ENCODE measurements at regions of chr3 and their contacts with region 1.

Region 1: DNA sequence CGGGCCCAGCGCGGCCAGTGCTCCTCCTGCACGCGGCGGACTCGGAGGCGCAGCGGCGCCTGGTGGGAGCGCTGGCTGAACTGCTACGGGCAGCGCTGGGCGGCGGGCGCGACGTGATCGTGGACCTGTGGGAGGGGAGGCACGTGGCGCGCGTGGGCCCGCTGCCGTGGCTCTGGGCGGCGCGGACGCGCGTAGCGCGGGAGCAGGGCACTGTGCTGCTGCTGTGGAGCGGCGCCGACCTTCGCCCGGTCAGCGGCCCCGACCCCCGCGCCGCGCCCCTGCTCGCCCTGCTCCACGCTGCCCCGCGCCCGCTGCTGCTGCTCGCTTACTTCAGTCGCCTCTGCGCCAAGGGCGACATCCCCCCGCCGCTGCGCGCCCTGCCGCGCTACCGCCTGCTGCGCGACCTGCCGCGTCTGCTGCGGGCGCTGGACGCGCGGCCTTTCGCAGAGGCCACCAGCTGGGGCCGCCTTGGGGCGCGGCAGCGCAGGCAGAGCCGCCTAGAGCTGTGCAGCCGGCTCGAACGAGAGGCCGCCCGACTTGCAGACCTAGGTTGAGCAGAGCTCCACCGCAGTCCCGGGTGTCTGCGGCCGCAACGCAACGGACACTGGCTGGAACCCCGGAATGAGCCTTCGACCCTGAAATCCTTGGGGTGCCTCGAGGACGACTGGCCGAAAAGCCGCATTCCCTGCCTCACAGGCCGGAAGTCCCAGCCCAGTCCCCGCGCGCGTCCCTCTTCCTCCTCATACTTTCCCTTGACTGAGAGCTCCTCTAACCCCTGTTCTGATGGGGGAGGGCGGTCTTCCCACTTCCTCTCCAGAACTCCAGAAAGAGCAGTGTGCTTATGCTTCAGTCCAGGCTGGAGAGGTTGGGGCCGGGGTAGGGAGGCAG is 1.4 kb upstream of the IL17RC start:
- DNase-seq: no peak
- H3K4me3 Mint-ChIP-seq: peak overlapping the region; percentile 68
- H3K27ac Mint-ChIP-seq: no peak overlapping the region
- H3K4me1 Mint-ChIP-seq: peaks cover 16% of the 10 kb centered on the region
- H3K27me3 Mint-ChIP-seq: peaks cover 7% of the 10 kb centered on the region

Region 2: DNA sequence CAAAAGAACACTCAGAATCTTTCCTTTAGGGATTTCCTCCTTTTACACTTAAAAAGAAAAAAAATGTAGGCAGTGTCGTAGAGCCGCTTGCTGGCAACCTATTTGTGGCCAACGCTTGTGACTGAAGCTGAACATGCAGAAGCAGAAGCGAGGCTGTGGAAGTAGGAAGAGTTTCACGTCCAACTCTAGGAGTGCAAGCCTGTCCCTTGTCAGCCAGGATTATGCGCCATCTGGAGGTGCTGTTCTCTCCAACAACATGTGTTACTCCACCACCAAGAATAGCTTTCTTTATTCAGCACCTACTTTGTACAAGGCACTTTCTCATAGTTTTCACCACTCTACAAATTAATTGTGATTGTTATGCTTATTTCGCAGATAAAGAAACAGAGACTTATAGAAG is 1637.0 kb before region 1 on chr3:
- intact Hi-C with region 1: no loop called
- DNase-seq: no peak
- H3K4me3 Mint-ChIP-seq: no peak overlapping the region
- H3K27ac Mint-ChIP-seq: no peak overlapping the region
- H3K4me1 Mint-ChIP-seq: no peaks in the 10 kb centered on the region
- H3K27me3 Mint-ChIP-seq: no peaks in the 10 kb centered on the region

Region 3: DNA sequence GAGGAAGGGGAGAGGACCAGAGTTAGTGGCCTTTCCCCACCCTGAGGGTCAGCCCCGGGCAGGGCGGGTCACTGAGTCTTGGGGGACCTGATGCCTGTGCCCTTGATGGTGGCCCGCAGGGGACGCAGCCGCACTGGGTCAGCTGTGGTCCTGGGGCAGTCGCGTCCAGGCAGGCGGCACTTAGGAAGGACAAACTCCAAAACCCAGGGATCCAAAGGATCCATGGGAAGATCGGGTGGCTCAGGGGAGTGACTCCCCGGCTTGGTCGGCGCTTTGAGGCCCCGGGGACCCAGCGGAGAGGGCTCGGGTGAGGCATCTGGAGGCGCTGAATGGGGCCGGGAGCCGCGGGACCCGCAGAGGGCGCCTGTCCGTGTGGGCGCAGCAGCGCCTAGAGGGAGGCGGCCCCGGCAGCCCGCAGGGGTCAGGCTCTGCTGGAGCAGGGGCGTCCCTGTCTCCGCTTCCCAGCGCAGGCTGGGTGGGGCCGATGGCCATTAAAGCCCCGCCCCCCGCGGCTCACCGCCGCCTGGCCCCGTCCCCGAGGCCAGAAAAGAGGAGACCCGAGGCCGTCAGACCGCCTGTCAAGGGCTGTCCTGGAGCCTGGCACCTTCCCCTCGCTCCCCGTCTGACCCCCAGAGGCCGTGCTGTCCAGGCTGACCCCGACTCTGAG is 53.0 kb before region 1 on chr3:
- intact Hi-C with region 1: loop called (anchors 5 kb)
- DNase-seq: no peak
- H3K4me3 Mint-ChIP-seq: peak overlapping the region; percentile 19
- H3K27ac Mint-ChIP-seq: no peak overlapping the region
- H3K4me1 Mint-ChIP-seq: no peaks in the 10 kb centered on the region
- H3K27me3 Mint-ChIP-seq: peaks cover 13% of the 10 kb centered on the region

Region 4: GRCh38 chr3:9902372-9903237 is 12.9 kb before region 1 on chr3 and contains the start of gene IL17RE:
- intact Hi-C with region 1: loop called (anchors 1 kb)
- DNase-seq: no peak
- H3K4me3 Mint-ChIP-seq: peak within 1 kb of the TSS; percentile 74
- H3K27ac Mint-ChIP-seq: peak within 1 kb of the TSS; percentile 90
- H3K4me1 Mint-ChIP-seq: peaks cover 42% of the 10 kb centered on the region
- H3K27me3 Mint-ChIP-seq: no peaks in the 10 kb centered on the region
- total RNA-seq, gene IL17RE: 3.2 and 3.5 TPM in 2 replicates